ENCODE measurements at regions of chr9 and their contacts with region 1.

Region 1: GRCh38 chr9:22052376-22052945 is 43.4 kb upstream of the CDKN2B start:
- DNase-seq: peak; percentile 40
- H3K4me3 Mint-ChIP-seq: no peak overlapping the region
- H3K27ac Mint-ChIP-seq: peak overlapping the region; percentile 5
- H3K4me1 Mint-ChIP-seq: peaks cover 32% of the 10 kb centered on the region
- H3K27me3 Mint-ChIP-seq: peaks cover 26% of the 10 kb centered on the region

Region 2: GRCh38 chr9:22073349-22073748 is 20.9 kb after region 1 on chr9:
- intact Hi-C with region 1: loop called (anchors 1 kb)
- DNase-seq: no peak
- H3K4me3 Mint-ChIP-seq: peak overlapping the region; percentile 4
- H3K27ac Mint-ChIP-seq: peak overlapping the region; percentile 56
- H3K4me1 Mint-ChIP-seq: peaks cover 64% of the 10 kb centered on the region
- H3K27me3 Mint-ChIP-seq: peaks cover 16% of the 10 kb centered on the region

Region 3: GRCh38 chr9:22105005-22105722 is 52.7 kb after region 1 on chr9:
- intact Hi-C with region 1: loop called (anchors 1 kb)
- DNase-seq: no peak
- H3K4me3 Mint-ChIP-seq: no peak overlapping the region
- H3K27ac Mint-ChIP-seq: no peak overlapping the region
- H3K4me1 Mint-ChIP-seq: peaks cover 47% of the 10 kb centered on the region
- H3K27me3 Mint-ChIP-seq: peaks cover 27% of the 10 kb centered on the region

Region 4: DNA sequence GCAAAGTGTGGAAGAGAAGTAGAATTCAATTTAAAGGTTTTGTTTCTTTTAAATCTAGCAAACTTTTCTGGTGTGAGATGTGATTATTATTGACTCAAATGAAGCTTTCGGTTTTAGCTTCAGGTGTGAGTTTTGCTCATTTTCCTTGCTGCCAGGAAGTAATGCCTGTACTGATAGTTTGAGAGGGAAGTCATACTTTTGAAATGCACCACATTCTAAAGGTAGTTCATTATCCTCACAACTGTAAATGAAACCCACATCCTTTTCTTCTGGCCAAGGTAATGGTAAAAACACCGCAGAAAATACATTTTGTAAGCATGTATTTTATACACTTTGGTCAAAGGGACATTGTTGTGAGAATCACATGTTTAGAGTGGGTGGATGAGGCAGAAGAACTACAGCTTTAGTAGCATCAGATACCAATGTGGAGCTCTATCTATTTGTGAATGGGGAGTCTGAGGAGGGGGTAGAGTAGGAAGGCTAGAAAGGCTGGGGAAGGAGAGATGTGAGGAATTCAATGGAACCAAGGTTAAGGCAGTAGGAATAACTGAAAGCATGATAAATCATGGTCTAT is 123.6 kb after region 1 on chr9:
- intact Hi-C with region 1: loop called (anchors 5 kb)
- DNase-seq: peak; percentile 5
- H3K4me3 Mint-ChIP-seq: peak overlapping the region; percentile 1
- H3K27ac Mint-ChIP-seq: peak overlapping the region; percentile 51
- H3K4me1 Mint-ChIP-seq: peaks cover 30% of the 10 kb centered on the region
- H3K27me3 Mint-ChIP-seq: peaks cover 10% of the 10 kb centered on the region

Region 5: GRCh38 chr9:22211593-22212360 is 159.3 kb after region 1 on chr9:
- intact Hi-C with region 1: loop called (anchors 5 kb)
- DNase-seq: no peak
- H3K4me3 Mint-ChIP-seq: no peak overlapping the region
- H3K27ac Mint-ChIP-seq: no peak overlapping the region
- H3K4me1 Mint-ChIP-seq: peaks cover 38% of the 10 kb centered on the region
- H3K27me3 Mint-ChIP-seq: peaks cover 21% of the 10 kb centered on the region

Measured in activated T-helper 1 cell treated with anti-CD3 and anti-CD28 coated beads, Interleukin-12 subunit alpha, Interleukin-12 subunit beta, Interleukin-2, Interleukin-4 antibody, amounts not matched to agents 30 ng/mL and 10 ng/mL and 1 ng/mL, durations not matched to agents 14 hours and 24 hours and 36 hours (primary cell).